ENCODE measurements at regions of chr22 and their contacts with region 1.

Region 1: GRCh38 chr22:25048659-25049647 is 96.4 kb downstream of the KIAA1671 start:
- DNase-seq: peak; percentile 46 to 84 (median 76)
- ATAC-seq: peak; percentile 56 to 84 (median 77)
- H3K4me3 ChIP-seq: no peak overlapping the region
- H3K27ac ChIP-seq: no peak overlapping the region
- H3K4me1 ChIP-seq: peaks cover 0 to 17% (median 6%) of the 10 kb centered on the region in 3 donors
- H3K27me3 ChIP-seq: no peaks in the 10 kb centered on the region
- CTCF ChIP-seq: peak; percentile 75 to 88 (median 82)

Region 2: DNA sequence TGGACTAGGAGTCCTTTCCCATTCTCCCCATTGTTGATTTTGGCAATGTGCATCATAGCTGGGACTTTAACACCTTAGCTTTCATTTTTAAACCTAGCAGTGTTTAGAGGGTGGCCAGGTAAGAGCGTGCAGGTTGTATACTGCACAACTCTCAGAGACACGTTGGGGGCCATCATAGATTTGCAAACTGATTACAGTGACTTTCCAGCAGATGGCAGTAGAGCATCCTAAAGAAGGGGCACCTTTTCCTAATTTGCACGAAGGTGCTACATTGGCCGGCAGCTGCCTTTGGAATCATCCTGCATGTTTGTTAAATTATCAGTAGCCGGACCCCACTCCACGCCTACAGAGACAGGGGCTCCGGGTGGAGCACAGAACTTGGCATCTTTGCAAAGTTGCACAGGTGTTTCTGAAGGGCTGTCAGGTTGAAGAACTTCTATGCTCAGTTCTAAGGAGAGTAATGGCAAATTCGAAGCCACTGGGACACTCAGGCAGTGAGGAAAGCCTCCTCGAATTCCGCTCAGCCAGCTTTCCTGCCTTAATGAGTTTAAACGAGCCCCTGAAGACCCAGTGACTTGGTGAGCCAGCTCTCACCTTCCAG is 110.1 kb before region 1 on chr22:
- intact Hi-C with region 1: loop called (anchors 5 to 10 kb)
- DNase-seq: peak in 2 of 6 donors; percentile 41 to 50
- ATAC-seq: peak in 3 of 4 donors; percentile 44 to 45 (median 45)
- H3K4me3 ChIP-seq: no peak overlapping the region
- H3K27ac ChIP-seq: no peak overlapping the region
- H3K4me1 ChIP-seq: peaks cover 6 to 19% (median 16%) of the 10 kb centered on the region in 3 donors
- H3K27me3 ChIP-seq: no peaks in the 10 kb centered on the region
- CTCF ChIP-seq: peak; percentile 53 to 71 (median 64)

Region 3: DNA sequence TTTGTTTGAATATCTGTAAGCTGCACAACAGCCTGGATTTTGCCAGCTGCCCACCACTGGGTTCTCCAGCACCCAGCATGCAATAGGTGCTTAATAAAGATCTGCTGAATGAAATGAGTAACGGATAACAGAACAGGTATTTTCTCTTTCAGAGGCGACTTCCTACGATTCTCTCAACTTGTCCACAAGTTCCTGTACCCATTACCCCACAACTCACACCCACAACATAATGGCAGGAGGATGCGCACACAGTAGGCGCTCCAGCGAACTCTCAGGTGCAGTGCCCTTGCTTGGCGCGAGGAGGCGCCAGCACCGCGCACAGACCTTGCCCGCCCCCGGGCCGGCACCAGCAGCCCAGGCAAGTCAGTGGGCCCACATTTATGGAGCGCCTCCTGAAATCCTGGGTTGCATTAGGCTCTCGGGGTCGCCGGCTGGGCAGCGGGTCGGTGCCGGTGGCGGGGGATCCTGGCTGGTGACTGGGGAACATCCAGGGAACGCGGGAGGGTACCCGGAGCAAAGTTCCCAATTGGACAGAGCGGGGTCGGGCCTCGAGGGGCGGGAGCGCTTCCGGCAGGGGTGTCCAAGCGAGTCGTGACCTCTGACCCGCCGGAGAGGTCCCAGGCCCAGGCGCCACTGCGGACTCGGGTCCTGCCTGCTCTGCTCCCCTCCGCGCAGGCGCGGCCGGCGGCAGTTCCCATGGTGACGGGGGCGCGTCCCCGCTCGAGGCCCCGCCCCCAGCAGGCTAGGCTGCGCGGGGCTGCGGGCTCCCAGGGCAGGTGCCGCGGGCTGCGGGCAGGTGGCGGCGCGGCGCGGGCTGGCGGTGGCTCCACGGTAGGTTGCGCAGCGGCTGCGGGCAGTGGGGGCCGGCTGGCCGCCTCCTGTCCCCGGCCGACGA is 96.8 kb before region 1 on chr22 and contains the start of gene KIAA1671:
- intact Hi-C with region 1: loop called in 2 of 3 experiments (anchors 5 kb)
- DNase-seq: peak; percentile 83 to 97 (median 94)
- ATAC-seq: peak; percentile 85 to 93 (median 90)
- H3K4me3 ChIP-seq: peak within 1 kb of the TSS; percentile 53 to 70 (median 68)
- H3K27ac ChIP-seq: peak within 1 kb of the TSS; percentile 57 to 89 (median 82)
- H3K4me1 ChIP-seq: peaks cover 12 to 35% (median 26%) of the 10 kb centered on the region in 3 donors
- H3K27me3 ChIP-seq: no peaks in the 10 kb centered on the region
- CTCF ChIP-seq: peak; percentile 55 to 98 (median 90)
- total RNA-seq, gene KIAA1671: 17.5 to 28.8 (median 20.4) TPM